ENCODE measurements at regions of chr12 and their contacts with region 1.

Region 1: GRCh38 chr12:101172316-101172715 is 37.7 kb downstream of the SLC5A8 start:
- DNase-seq: peak; percentile 11
- H3K4me3 ChIP-seq: no peak overlapping the region
- H3K27ac ChIP-seq: no peak overlapping the region
- H3K4me1 ChIP-seq: no peaks in the 10 kb centered on the region
- H3K27me3 ChIP-seq: no peaks in the 10 kb centered on the region
- CTCF ChIP-seq: peak in 1 of 2 donors; percentile 21

Region 2: GRCh38 chr12:101280006-101280505 is 107.7 kb after region 1 on chr12 and contains the start of gene UTP20:
- CTCF ChIA-PET with region 1: no interaction called
- dilution Hi-C with region 1: no loop called
- in situ Hi-C with region 1: no loop called
- intact Hi-C with region 1: loop called (anchors 5 kb)
- DNase-seq: peak; percentile 84
- H3K4me3 ChIP-seq: peak within 1 kb of the TSS; percentile 82 to 100 (median 99)
- H3K27ac ChIP-seq: peak within 1 kb of the TSS; percentile 78
- H3K4me1 ChIP-seq: no peaks in the 10 kb centered on the region
- H3K27me3 ChIP-seq: no peaks in the 10 kb centered on the region
- CTCF ChIP-seq: no peak
- total RNA-seq, gene UTP20: 19.2 to 21.2 TPM

Region 3: GRCh38 chr12:101323255-101323654 is 150.9 kb after region 1 on chr12:
- CTCF ChIA-PET with region 1: no interaction called
- dilution Hi-C with region 1: no loop called
- in situ Hi-C with region 1: no loop called
- intact Hi-C with region 1: loop called (anchors 1 kb)
- DNase-seq: no peak
- H3K4me3 ChIP-seq: no peak overlapping the region
- H3K27ac ChIP-seq: no peak overlapping the region
- H3K4me1 ChIP-seq: no peaks in the 10 kb centered on the region
- H3K27me3 ChIP-seq: no peaks in the 10 kb centered on the region
- CTCF ChIP-seq: no peak